ENCODE measurements at regions of chr15 and their contacts with region 1.

Region 1: GRCh38 chr15:62306851-62307504 is 141.9 kb upstream of the C2CD4B start:
- DNase-seq: peak; percentile 75
- H3K4me3 Mint-ChIP-seq: no peak overlapping the region
- H3K27ac Mint-ChIP-seq: no peak overlapping the region
- H3K4me1 Mint-ChIP-seq: peaks cover 11% of the 10 kb centered on the region
- H3K27me3 Mint-ChIP-seq: no peaks in the 10 kb centered on the region
- CTCF ChIP-seq: peak; percentile 79

Region 2: GRCh38 chr15:61871926-61872522 is 435.0 kb before region 1 on chr15:
- CTCF ChIA-PET with region 1: interaction called, 6 read pairs
- POLR2A ChIA-PET with region 1: interaction called, 3 read pairs
- intact Hi-C with region 1: loop called (anchors 1 kb)
- DNase-seq: peak; percentile 38
- H3K4me3 Mint-ChIP-seq: no peak overlapping the region
- H3K27ac Mint-ChIP-seq: peak overlapping the region; percentile 31
- H3K4me1 Mint-ChIP-seq: no peaks in the 10 kb centered on the region
- H3K27me3 Mint-ChIP-seq: no peaks in the 10 kb centered on the region
- CTCF ChIP-seq: peak; percentile 54

Region 3: DNA sequence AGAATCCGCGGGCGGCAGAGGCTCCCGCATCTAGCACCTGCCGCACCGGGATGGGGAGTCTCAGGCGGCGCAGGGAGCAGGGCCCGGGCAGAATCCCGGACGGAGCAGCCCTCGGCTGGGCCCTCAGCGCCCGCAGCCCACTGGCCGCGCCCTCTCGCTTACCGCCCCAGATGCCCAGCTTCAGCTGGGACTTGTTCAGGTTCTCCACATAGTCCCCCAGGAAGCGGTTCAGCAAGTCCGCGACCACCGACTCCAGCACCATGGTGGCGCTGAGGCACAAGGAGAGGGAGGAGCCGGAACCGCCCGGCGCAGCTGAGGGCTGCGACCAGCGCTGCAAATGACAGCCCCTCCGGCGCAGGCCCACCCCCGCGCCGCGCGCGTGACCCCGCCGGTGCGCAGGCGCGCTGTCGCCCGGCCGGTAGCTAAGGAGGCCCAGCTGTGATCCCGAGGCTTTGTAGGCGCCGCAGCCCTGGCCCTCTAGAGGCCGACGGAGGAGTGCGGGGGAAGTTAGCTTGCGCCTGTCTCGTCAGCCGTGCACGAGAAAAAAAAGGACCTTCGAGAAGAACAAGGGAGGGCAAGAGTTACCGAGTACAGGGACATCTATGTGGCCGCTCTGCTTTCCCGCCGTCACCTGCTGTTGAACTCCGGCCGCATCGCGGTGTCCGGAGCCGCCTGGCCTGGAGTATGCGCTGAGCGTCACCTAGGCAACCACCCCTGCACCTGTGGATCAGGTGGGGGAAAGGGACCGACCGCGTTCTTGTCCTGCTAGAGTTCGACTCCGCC is 246.7 kb before region 1 on chr15 and contains the start of gene VPS13C:
- CTCF ChIA-PET with region 1: interaction called, 19 read pairs
- POLR2A ChIA-PET with region 1: interaction called, 10 read pairs
- intact Hi-C with region 1: no loop called
- DNase-seq: peak; percentile 90
- H3K4me3 Mint-ChIP-seq: peak within 1 kb of the TSS; percentile 88
- H3K27ac Mint-ChIP-seq: peak within 1 kb of the TSS; percentile 86
- H3K4me1 Mint-ChIP-seq: peaks cover 28% of the 10 kb centered on the region
- H3K27me3 Mint-ChIP-seq: no peaks in the 10 kb centered on the region
- CTCF ChIP-seq: peak; percentile 69
- total RNA-seq, gene VPS13C: 47.4 and 58.7 TPM in 2 replicates

Region 4: DNA sequence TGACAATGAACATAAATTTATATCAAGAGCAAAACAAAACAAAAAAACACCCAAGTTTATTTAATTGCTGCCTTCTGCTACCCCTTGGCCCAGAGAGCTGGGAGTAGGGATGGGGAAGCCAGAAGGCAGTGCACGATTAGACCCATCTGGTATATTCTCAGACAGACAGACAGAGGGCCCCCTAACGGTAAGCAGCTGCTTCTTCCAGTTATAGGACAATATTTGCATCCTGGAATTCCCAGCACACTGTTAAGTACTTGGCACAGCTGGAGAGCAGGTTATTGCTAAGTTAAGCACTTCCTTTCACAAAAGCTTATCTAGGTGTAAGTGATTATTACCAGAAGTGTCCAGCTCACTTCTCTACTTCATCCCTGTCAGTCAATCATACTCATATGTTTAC is 181.2 kb before region 1 on chr15:
- CTCF ChIA-PET with region 1: interaction called, 17 read pairs
- POLR2A ChIA-PET with region 1: interaction called, 10 read pairs
- intact Hi-C with region 1: loop called (anchors 1 kb)
- DNase-seq: peak; percentile 60
- H3K4me3 Mint-ChIP-seq: no peak overlapping the region
- H3K27ac Mint-ChIP-seq: peak overlapping the region; percentile 84
- H3K4me1 Mint-ChIP-seq: peaks cover 18% of the 10 kb centered on the region
- H3K27me3 Mint-ChIP-seq: no peaks in the 10 kb centered on the region
- CTCF ChIP-seq: no peak

Region 5: DNA sequence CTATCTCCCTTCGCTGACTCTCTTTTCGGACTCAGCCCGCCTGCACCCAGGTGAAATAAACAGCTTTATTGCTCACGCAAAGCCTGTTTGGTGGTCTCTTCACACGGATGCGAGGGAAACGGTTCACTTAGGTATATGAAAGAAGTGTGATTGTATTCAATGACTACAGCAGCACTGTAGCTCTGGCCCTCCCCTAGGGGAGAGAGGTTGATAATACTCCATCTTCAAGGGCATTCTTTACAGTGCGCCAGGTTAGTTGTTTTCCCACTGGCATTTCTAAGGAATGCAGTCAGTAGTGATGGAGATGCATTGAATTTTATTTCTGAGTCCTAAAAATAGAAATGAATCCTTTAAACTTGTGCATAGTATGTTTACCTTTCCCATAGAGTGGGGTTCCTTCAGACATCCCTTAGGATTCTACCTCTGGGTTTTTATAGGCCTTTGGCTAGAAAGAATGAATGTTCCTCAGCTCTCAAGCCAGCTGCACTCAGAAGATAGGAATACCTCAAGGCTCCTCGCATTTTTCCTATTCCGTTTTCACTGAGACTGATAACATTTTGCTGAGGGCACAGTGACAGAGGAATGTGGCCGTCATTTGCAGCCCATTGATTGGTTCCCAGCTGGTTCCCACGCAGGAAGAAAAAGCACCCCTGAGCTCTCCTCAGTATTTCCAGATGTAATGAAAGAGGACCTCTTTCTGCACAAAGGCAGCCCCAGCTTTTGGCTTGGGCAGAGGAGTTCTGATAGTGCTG is 10.0 kb before region 1 on chr15:
- CTCF ChIA-PET with region 1: interaction called, 22 read pairs
- POLR2A ChIA-PET with region 1: interaction called, 5 read pairs
- intact Hi-C with region 1: no loop called
- DNase-seq: no peak
- H3K4me3 Mint-ChIP-seq: no peak overlapping the region
- H3K27ac Mint-ChIP-seq: no peak overlapping the region
- H3K4me1 Mint-ChIP-seq: no peaks in the 10 kb centered on the region
- H3K27me3 Mint-ChIP-seq: peaks cover 7% of the 10 kb centered on the region
- CTCF ChIP-seq: no peak

Region 6: DNA sequence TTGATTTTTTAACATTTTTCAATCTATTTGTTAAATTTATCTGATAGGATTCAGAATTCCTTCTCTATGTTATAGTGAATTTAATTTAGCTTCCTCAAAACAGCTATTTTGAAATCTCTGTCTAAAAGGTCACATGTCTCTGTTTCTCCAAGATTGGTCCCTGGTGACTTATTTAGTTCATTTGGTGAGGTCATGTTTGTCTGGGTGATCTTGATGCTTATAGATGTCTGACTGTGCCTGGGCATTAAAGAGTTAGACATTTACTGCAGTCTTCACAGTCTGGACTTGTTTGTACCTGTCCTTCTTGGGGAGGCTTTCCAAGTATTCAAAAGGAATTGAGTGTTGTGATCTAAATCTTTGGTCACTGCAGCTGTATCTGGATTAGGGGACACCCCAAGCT is 27.6 kb after region 1 on chr15:
- CTCF ChIA-PET with region 1: interaction called, 14 read pairs
- POLR2A ChIA-PET with region 1: interaction called, 4 read pairs
- intact Hi-C with region 1: no loop called
- DNase-seq: no peak
- H3K4me3 Mint-ChIP-seq: no peak overlapping the region
- H3K27ac Mint-ChIP-seq: no peak overlapping the region
- H3K4me1 Mint-ChIP-seq: no peaks in the 10 kb centered on the region
- H3K27me3 Mint-ChIP-seq: no peaks in the 10 kb centered on the region
- CTCF ChIP-seq: no peak

Region 7: GRCh38 chr15:62439543-62440016 is 132.6 kb after region 1 on chr15:
- CTCF ChIA-PET with region 1: no interaction called
- POLR2A ChIA-PET with region 1: no interaction called
- intact Hi-C with region 1: no loop called
- DNase-seq: no peak
- H3K4me3 Mint-ChIP-seq: no peak overlapping the region
- H3K27ac Mint-ChIP-seq: no peak overlapping the region
- H3K4me1 Mint-ChIP-seq: peaks cover 7% of the 10 kb centered on the region
- H3K27me3 Mint-ChIP-seq: no peaks in the 10 kb centered on the region
- CTCF ChIP-seq: no peak

Measured in MCF 10A (cell line).